Activated B cell treated with CpG ODN at 0.5 μM for 24 hours (primary cell): ENCODE measurements at regions of chr18 and their contacts with region 1.

Region 1: DNA sequence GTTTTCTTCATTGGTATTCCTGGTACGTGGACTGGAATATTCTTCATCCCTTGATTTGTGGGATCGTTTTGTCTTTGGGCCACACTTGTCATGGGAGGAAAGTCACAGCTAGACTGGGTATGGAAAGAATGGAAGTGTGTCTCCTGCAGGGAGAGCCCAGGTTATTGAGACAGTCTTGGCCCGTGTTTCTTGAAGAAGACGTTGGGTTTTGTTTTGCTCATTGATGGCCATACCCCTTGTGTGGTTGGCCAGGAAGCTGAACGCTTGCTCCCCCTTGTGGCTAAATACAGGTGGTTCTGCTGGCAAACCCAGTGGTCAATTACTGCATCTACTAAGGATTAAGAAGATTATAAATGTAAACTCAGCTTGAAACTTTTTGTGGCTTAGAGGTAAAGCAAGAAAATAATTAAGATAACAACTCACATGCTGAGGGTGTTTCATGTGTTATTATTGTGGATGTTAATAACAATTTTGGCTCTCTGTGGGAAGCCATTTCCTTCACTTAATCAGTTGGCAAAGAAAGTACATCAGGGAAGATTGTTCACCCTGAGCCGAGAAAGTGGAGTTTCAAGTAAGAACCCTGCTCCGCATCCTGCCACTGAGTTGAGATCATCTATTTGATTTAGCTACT is 91.8 kb downstream of the NEDD4L start:
- DNase-seq: peak; percentile 25
- ATAC-seq: peak; percentile 65
- H3K4me3 Mint-ChIP-seq: peak overlapping the region; percentile 52
- H3K27ac Mint-ChIP-seq: peak overlapping the region; percentile 3
- H3K4me1 Mint-ChIP-seq: peaks cover 33% of the 10 kb centered on the region
- H3K27me3 Mint-ChIP-seq: no peaks in the 10 kb centered on the region
- CTCF ChIP-seq: no peak

Region 2: GRCh38 chr18:56748698-56749268 is 1387.0 kb before region 1 on chr18:
- CTCF ChIA-PET with region 1: no interaction called
- POLR2A ChIA-PET with region 1: no interaction called
- intact Hi-C with region 1: loop called (anchors 10 kb)
- DNase-seq: no peak
- ATAC-seq: no peak
- H3K4me3 Mint-ChIP-seq: no peak overlapping the region
- H3K27ac Mint-ChIP-seq: no peak overlapping the region
- H3K4me1 Mint-ChIP-seq: peaks cover 20% of the 10 kb centered on the region
- H3K27me3 Mint-ChIP-seq: no peaks in the 10 kb centered on the region
- CTCF ChIP-seq: no peak

Region 3: DNA sequence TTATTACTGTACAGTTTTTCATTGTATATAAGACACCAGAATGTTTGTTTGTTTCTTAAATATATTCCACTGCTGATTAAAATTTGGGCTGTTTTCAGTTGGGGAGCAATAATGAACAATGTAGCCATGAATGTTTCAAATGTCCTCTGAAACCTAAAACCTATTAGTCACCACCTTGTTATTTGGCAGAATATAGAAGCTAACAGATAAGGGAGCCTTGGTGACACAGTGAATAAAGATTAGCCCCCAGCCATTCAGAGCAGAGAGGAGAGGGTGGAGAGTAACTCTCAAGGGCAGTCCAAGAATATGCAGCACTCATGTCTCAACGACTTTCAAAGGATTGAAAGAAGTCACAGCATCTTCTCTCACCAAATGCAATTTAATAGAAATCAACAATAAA is 289.6 kb before region 1 on chr18:
- CTCF ChIA-PET with region 1: no interaction called
- POLR2A ChIA-PET with region 1: no interaction called
- intact Hi-C with region 1: no loop called
- DNase-seq: no peak
- ATAC-seq: no peak
- H3K4me3 Mint-ChIP-seq: no peak overlapping the region
- H3K27ac Mint-ChIP-seq: no peak overlapping the region
- H3K4me1 Mint-ChIP-seq: peaks cover 22% of the 10 kb centered on the region
- H3K27me3 Mint-ChIP-seq: no peaks in the 10 kb centered on the region
- CTCF ChIP-seq: no peak

Region 4: DNA sequence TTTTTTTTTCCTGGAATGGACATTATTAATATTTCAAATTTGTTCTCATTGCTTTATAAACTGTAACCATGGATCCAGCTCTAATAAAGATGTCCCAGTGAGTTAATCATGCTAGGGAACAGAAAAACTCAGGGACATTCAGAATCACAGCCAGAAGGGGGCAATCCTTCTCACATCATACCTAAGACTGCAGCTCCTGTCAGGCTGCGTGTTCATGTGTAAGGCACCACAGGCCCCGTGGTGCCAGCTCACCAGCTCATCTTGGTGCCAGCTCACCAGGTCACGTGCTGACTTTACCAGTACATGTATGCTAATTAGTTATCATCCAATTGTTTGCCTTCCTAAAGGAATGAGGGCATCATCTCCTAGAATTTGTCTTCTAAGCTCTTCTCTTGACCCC is 176.5 kb before region 1 on chr18:
- CTCF ChIA-PET with region 1: interaction called, 17 read pairs
- POLR2A ChIA-PET with region 1: no interaction called
- intact Hi-C with region 1: loop called (anchors 1 kb)
- DNase-seq: no peak
- ATAC-seq: peak; percentile 88
- H3K4me3 Mint-ChIP-seq: no peak overlapping the region
- H3K27ac Mint-ChIP-seq: no peak overlapping the region
- H3K4me1 Mint-ChIP-seq: no peaks in the 10 kb centered on the region
- H3K27me3 Mint-ChIP-seq: no peaks in the 10 kb centered on the region
- CTCF ChIP-seq: no peak

Region 5: DNA sequence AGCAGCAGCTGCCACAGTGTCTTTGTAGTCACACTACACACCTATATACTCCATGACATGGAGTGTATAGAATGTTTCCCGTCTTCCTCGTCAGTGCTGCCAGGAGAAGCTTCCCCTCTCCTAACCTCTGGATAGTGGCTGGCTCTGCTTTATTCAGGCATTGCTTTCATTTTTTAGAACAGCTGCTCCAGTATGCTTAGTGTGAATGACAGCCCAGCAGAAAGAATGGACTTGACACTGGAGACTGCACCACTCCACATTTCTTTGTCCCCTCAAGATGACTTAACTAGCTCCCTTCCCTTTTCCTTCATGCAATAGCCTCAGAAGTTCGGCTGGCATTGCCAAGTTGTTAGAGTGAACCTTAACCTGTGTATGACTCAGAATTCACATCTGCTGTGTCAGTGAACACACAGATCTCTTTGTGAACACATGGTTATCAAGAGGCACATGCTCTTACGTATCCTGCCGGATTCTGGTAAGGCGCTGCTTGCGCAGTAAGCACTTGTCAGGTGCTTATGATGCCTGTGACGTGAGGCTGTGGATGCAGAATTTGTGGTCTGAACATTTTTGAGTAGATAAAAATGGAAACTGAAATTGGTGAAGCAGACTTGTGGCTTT is 17.9 kb before region 1 on chr18:
- CTCF ChIA-PET with region 1: interaction called, 13 read pairs
- POLR2A ChIA-PET with region 1: no interaction called
- intact Hi-C with region 1: no loop called
- DNase-seq: no peak
- ATAC-seq: no peak
- H3K4me3 Mint-ChIP-seq: no peak overlapping the region
- H3K27ac Mint-ChIP-seq: no peak overlapping the region
- H3K4me1 Mint-ChIP-seq: peaks cover 10% of the 10 kb centered on the region
- H3K27me3 Mint-ChIP-seq: no peaks in the 10 kb centered on the region
- CTCF ChIP-seq: no peak

Region 6: DNA sequence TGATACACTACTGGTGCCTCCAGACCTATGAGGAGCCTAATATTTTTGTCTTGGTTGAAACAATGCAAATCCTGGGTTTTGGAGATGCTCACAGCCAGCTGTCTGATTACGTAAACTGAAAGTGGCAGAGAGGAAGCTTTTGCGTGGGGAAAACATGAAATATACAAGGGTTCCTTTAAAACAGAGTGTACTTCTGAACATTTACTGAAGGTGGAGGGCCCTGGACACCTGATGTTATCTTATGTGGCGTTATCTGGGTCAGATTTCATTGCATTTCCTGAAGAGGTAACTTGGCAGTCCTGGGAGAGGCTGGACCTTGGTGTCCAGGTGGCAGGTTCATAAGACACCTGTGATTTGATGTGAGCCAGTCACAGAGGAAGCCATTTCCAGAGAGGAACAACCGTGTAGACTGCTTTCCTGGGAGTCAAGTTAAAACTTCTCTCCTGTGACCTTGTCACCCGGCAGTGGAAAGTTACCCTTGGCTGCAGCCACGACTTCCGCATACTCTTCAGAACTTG is 13.2 kb after region 1 on chr18:
- CTCF ChIA-PET with region 1: interaction called, 13 read pairs
- POLR2A ChIA-PET with region 1: interaction called, 5 read pairs
- intact Hi-C with region 1: loop called (anchors 1 kb)
- DNase-seq: no peak
- ATAC-seq: peak; percentile 88
- H3K4me3 Mint-ChIP-seq: peak overlapping the region; percentile 67
- H3K27ac Mint-ChIP-seq: peak overlapping the region; percentile 73
- H3K4me1 Mint-ChIP-seq: peaks cover 17% of the 10 kb centered on the region
- H3K27me3 Mint-ChIP-seq: no peaks in the 10 kb centered on the region
- CTCF ChIP-seq: no peak